Activated B cell treated with CpG ODN at 0.5 μM for 24 hours (primary cell): ENCODE measurements at regions of chr1 and their contacts with region 1.

Region 1: GRCh38 chr1:37006132-37006868 is 28.0 kb downstream of the GRIK3 start:
- DNase-seq: no peak
- ATAC-seq: no peak
- H3K4me3 Mint-ChIP-seq: no peak overlapping the region
- H3K27ac Mint-ChIP-seq: no peak overlapping the region
- H3K4me1 Mint-ChIP-seq: no peaks in the 10 kb centered on the region
- H3K27me3 Mint-ChIP-seq: no peaks in the 10 kb centered on the region
- CTCF ChIP-seq: no peak

Region 2: GRCh38 chr1:36664571-36665287 is 341.6 kb before region 1 on chr1:
- CTCF ChIA-PET with region 1: no interaction called
- POLR2A ChIA-PET with region 1: no interaction called
- intact Hi-C with region 1: no loop called
- DNase-seq: no peak
- ATAC-seq: no peak
- H3K4me3 Mint-ChIP-seq: no peak overlapping the region
- H3K27ac Mint-ChIP-seq: no peak overlapping the region
- H3K4me1 Mint-ChIP-seq: peaks cover 13% of the 10 kb centered on the region
- H3K27me3 Mint-ChIP-seq: peaks cover 14% of the 10 kb centered on the region
- CTCF ChIP-seq: no peak

Region 3: DNA sequence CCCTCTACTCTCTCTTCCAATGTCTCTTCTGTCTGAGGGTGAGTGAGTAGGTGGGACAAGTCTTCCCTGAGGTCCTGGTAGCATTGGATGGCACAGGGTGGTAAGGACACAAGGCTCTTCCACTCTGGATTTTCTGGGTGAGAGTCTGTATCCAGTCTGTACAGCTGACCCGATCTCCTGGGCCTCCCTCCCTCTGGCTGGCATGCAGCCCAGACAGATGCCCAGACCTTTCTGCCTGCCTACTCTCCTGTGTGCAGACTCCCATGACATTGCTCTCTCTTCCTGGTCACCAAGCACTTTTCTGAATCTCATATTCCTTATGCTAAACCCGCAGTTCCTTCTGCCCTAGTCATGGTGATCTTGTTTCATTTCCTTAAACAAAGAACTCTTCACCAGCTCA is 72.2 kb before region 1 on chr1:
- CTCF ChIA-PET with region 1: no interaction called
- POLR2A ChIA-PET with region 1: interaction called, 12 read pairs
- intact Hi-C with region 1: no loop called
- DNase-seq: no peak
- ATAC-seq: no peak
- H3K4me3 Mint-ChIP-seq: no peak overlapping the region
- H3K27ac Mint-ChIP-seq: no peak overlapping the region
- H3K4me1 Mint-ChIP-seq: no peaks in the 10 kb centered on the region
- H3K27me3 Mint-ChIP-seq: peaks cover 11% of the 10 kb centered on the region
- CTCF ChIP-seq: no peak